Panc1 (cell line): ENCODE measurements at regions of chr2 and their contacts with region 1.

Region 1: GRCh38 chr2:190648289-190649034 is 421 bp upstream of the NAB1 start:
- DNase-seq: no peak
- ATAC-seq: peak; percentile 93
- H3K4me3 ChIP-seq: peak overlapping the region; percentile 73 to 87
- H3K27ac ChIP-seq: peak overlapping the region; percentile 82
- H3K4me1 ChIP-seq: peaks cover 12% of the 10 kb centered on the region
- H3K27me3 ChIP-seq: no peaks in the 10 kb centered on the region
- CTCF ChIP-seq: no peak

Region 2: DNA sequence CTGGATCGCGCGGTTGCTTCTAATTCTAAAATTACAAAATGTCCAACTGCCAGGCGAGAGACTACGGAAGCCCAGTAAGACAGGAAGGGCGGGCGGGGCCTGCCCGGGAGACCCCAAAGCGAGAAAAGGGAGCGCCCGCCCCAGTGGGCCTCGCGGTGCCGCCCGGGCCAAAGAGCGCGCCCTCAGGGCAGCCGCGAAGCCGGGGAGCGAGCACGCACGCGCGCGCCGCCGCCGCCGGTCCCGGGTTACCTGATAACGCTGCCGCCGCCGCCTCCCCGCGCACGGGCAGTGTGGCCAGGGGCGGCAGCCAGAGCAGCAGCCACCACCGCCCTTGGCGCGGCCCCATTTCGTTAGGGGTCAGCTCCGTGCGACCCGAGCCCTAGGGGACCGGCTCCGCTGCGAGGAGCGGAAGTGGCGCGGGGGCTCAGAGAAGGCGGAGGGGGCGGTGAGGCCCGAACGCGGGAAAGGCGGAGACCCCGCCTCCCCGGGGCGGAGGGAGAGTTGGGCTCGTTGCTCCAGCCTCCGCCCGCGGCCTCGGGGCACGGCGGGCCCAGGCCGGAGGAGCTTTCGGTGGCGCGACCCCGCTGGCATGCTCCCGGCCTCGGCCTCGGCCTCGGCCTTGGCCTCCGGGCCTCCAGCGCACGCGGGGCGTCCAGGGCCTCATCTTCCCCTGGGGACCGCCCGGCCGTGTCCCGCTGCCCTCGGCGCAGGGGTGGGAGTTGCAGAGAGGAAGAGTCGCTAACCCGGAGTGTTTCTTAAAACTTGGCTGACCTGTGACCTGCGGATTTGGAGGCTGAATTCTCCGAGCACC is 113.9 kb before region 1 on chr2 and contains the start of gene NEMP2:
- CTCF ChIA-PET with region 1: no interaction called
- POLR2A ChIA-PET with region 1: no interaction called
- in situ Hi-C with region 1: no loop called
- intact Hi-C with region 1: loop called (anchors 10 kb)
- DNase-seq: peak; percentile 20
- ATAC-seq: peak; percentile 94
- H3K4me3 ChIP-seq: peak within 1 kb of the TSS; percentile 74 to 84
- H3K27ac ChIP-seq: peak within 1 kb of the TSS; percentile 99
- H3K4me1 ChIP-seq: peaks cover 11% of the 10 kb centered on the region
- H3K27me3 ChIP-seq: no peaks in the 10 kb centered on the region
- CTCF ChIP-seq: no peak
- total RNA-seq, gene NEMP2: 12.0 TPM

Region 3: DNA sequence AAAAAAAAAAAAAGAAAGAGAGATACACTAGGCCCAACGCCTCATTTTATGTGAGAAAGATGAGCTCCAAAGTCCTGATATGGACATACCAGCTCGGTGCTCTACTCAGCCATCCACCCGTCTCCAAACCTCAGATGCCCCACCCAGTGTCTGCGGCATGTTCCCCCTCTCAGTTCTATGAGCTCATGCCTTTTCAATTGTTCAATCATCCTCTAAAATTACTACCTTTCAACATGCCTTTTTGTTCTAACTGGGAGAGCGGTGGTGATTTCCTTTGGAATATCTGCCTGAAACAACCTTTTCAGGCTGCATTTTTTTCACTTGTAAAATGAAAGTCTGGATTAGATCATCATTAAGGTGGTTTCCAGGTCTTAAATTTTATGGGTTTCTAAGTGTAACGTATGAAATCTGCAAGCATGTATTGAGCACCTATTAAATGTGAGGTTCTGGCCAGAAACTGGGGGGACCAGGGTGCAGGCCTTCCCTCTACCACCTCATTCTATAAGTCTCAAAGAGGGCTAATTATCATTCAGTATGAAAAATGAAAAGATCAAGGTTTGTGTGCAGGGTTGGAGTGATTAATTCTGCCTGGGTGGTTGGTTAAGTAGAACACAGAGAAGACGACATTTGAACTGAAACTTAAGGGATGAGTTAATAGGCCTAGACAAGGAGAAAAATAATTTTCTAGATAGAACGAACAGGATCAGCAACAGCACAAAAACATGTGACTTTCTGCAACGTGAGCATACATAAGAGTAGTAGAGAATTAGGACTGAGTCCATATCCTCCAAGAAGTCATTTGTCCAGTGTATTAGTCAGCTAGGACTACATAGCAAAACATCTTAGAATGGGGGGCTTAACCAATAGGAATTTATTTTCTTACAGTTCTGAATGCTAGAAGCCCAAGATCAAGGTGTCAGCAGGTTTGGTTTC is 144.8 kb after region 1 on chr2:
- CTCF ChIA-PET with region 1: no interaction called
- POLR2A ChIA-PET with region 1: interaction called, 11 read pairs
- in situ Hi-C with region 1: no loop called
- intact Hi-C with region 1: no loop called
- DNase-seq: no peak
- ATAC-seq: no peak
- H3K4me3 ChIP-seq: no peak overlapping the region
- H3K27ac ChIP-seq: no peak overlapping the region
- H3K4me1 ChIP-seq: no peaks in the 10 kb centered on the region; the same call in 1 of the 2 replicates
- H3K27me3 ChIP-seq: no peaks in the 10 kb centered on the region
- CTCF ChIP-seq: no peak